Activated naive CD4-positive, alpha-beta T cell treated with anti-CD3 and anti-CD28 coated beads for 36 hours (primary cell): ENCODE measurements at regions of chr3 and their contacts with region 1.

Region 1: GRCh38 chr3:68893600-68894239 is 38.6 kb downstream of the TAFA4 start:
- DNase-seq: no peak
- H3K4me3 Mint-ChIP-seq: no peak overlapping the region
- H3K27ac Mint-ChIP-seq: no peak overlapping the region
- H3K4me1 Mint-ChIP-seq: no peaks in the 10 kb centered on the region
- H3K27me3 Mint-ChIP-seq: peaks cover 6% of the 10 kb centered on the region

Region 2: DNA sequence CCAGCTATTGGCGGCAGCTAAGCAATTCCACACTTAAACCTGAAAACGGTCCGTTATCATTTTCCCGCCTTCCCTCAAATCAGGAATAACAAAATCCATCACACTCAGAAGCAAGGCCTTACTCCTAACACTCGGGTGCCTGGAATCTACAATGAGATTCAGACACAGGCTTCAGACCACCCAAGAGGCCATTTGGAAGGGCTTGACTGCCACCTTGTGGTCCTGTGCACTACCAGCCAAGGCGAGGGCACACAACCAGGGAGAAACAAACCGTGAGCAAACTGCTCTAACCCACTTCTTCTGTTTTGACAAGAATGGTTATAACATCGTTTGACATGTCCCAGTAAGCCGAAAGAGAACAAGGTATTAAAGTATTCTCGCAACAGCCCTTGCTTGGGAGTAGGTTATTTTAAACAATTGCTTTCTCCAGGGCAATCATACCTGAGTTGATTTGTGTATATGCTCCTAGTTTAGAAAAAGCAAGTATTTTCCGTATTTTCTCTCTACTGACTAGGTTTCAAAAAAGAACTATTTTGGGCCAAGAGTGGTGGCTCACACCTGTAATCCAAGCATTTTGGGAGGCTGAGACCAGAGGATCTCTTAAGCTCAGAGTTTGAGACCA is 78.7 kb after region 1 on chr3:
- CTCF ChIA-PET with region 1: interaction called, 19 read pairs
- intact Hi-C with region 1: loop called (anchors 5 kb)
- DNase-seq: peak; percentile 58
- H3K4me3 Mint-ChIP-seq: no peak overlapping the region
- H3K27ac Mint-ChIP-seq: no peak overlapping the region
- H3K4me1 Mint-ChIP-seq: no peaks in the 10 kb centered on the region
- H3K27me3 Mint-ChIP-seq: no peaks in the 10 kb centered on the region